GM12878 (cell line): ENCODE measurements at regions of chr2 and their contacts with region 1.

Region 1: DNA sequence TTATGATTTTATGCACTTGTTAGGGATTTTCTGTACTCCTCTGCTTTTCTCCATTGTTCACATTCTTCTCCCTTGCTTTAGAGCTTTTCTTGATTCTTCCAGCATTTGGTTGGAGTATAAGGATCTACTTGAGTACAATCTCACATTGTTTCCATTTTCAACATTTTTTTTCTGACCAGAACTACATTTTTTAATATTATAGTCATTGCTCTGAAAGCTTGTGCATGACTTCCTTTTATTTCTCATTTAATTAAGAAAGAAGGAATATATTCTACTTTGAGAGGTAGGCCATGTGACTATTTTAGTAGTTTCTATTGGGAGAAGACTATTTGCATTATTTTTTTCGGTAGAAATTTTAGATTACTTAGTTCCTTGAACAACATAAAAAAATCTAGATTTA is 200.4 kb downstream of the TMEM247 start:
- DNase-seq: no peak
- ATAC-seq: no peak
- H3K4me3 ChIP-seq: no peak overlapping the region
- H3K27ac ChIP-seq: no peak overlapping the region
- H3K4me1 ChIP-seq: no peaks in the 10 kb centered on the region
- H3K27me3 ChIP-seq: no peaks in the 10 kb centered on the region
- CTCF ChIP-seq: no peak
- EP300 ChIP-seq: no peak
- POLR2A ChIP-seq: no peak
- RAD21 ChIP-seq: no peak

Region 2: DNA sequence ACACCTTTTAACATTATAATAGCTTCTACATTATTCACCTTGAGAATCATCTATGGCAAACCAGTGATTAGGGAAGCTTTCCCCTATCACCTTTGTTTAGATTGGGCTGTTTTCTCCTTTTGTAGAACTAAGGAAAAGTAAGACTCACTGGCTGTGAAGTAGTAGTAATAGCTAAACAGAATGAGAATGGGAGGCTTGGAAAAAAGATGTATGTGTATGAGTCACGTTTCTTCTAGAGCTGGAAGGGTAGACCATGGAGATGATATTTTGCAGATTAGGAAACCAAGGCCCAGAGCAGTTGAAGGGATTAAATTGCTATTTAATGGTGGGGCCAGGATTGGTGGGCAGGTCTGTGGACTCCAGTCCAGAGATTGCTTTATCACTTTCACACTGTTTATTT is 21.4 kb after region 1 on chr2:
- CTCF ChIA-PET with region 1: no interaction called
- POLR2A ChIA-PET with region 1: no interaction called
- RAD21 ChIA-PET with region 1: no interaction called
- SMC1A ChIA-PET with region 1: no interaction called
- in situ Hi-C with region 1: no loop called
- intact Hi-C with region 1: no loop called
- DNase-seq: no peak
- ATAC-seq: no peak
- H3K4me3 ChIP-seq: peak overlapping the region; percentile 5; the same call in 1 of the 2 replicates
- H3K27ac ChIP-seq: no peak overlapping the region
- H3K4me1 ChIP-seq: peaks cover 8% of the 10 kb centered on the region; the same call in 1 of the 2 replicates
- H3K27me3 ChIP-seq: no peaks in the 10 kb centered on the region
- CTCF ChIP-seq: no peak
- EP300 ChIP-seq: no peak
- POLR2A ChIP-seq: no peak
- RAD21 ChIP-seq: no peak

Region 3: GRCh38 chr2:46737577-46737976 is 57.8 kb after region 1 on chr2:
- CTCF ChIA-PET with region 1: no interaction called
- POLR2A ChIA-PET with region 1: interaction called, 10 read pairs
- RAD21 ChIA-PET with region 1: no interaction called
- SMC1A ChIA-PET with region 1: no interaction called
- in situ Hi-C with region 1: no loop called
- intact Hi-C with region 1: no loop called
- DNase-seq: no peak
- ATAC-seq: no peak
- H3K4me3 ChIP-seq: no peak overlapping the region
- H3K27ac ChIP-seq: no peak overlapping the region
- H3K4me1 ChIP-seq: no peaks in the 10 kb centered on the region
- H3K27me3 ChIP-seq: no peaks in the 10 kb centered on the region
- CTCF ChIP-seq: no peak
- EP300 ChIP-seq: no peak
- POLR2A ChIP-seq: no peak
- RAD21 ChIP-seq: no peak